H1 (cell line): ENCODE measurements at regions of chr16 and their contacts with region 1.

Region 1: DNA sequence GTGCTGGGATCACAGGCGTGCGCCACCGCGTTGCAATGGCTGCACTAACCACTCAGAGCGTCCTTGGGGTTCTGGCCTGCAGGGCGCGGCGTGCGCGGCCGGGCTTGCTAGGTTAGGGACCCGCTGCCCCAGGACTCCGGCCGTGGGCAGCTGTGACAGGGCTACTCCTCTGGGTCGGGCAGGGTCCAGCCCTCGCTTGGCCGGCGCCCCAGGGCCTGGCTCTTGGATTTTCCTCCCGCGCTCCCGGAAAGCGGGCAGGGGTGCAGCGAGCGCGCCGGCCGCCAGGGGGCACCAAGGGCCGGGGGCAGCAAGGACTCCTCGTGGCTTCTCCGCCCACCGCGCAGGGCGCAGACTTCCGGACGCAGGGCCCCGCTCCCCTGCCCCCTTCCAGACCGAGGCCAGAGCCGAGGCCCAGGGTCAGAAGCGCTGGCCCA is 489 bp downstream of the TLE7 start:
- DNase-seq: peak in 1 of 2 experiments; percentile 95
- H3K4me3 ChIP-seq: no peak overlapping the region
- H3K27ac ChIP-seq: no peak overlapping the region
- H3K4me1 ChIP-seq: no peaks in the 10 kb centered on the region; a peak in 1 of 7 replicates
- H3K27me3 ChIP-seq: no peaks in the 10 kb centered on the region
- CTCF ChIP-seq: peak; percentile 71 to 76 (median 74)
- EP300 ChIP-seq: no peak
- POLR2A ChIP-seq: no peak
- RAD21 ChIP-seq: peak; percentile 49 to 65

Region 2: GRCh38 chr16:71358464-71358998 is 82.8 kb before region 1 on chr16 and contains the start of gene CALB2:
- CTCF ChIA-PET with region 1: no interaction called
- POLR2A ChIA-PET with region 1: no interaction called
- DNase-seq: peak; percentile 27 to 91
- H3K4me3 ChIP-seq: peak within 1 kb of the TSS; percentile 30 to 65 (median 51); a peak in 7 of 8 replicates
- H3K27ac ChIP-seq: no peak within 1 kb of the TSS
- H3K4me1 ChIP-seq: peaks cover 0 to 12% (median 6%) of the 10 kb centered on the region in 4 experiments; a peak in 5 of 7 replicates
- H3K27me3 ChIP-seq: peaks cover 0 to 22% (median 18%) of the 10 kb centered on the region in 4 experiments; a peak in 6 of 7 replicates
- CTCF ChIP-seq: peak; percentile 77 to 97 (median 85)
- EP300 ChIP-seq: 0 out of 3 replicates have a peak, but pooled peaks of 1 of the 2 experiments have one; percentile 21
- POLR2A ChIP-seq: peak in 1 of 2 experiments; percentile 64; a peak in 1 of 3 replicates
- RAD21 ChIP-seq: peak; percentile 73 to 98
- total RNA-seq, gene CALB2: 1.9 and 2.7 TPM in 2 replicates

Region 3: DNA sequence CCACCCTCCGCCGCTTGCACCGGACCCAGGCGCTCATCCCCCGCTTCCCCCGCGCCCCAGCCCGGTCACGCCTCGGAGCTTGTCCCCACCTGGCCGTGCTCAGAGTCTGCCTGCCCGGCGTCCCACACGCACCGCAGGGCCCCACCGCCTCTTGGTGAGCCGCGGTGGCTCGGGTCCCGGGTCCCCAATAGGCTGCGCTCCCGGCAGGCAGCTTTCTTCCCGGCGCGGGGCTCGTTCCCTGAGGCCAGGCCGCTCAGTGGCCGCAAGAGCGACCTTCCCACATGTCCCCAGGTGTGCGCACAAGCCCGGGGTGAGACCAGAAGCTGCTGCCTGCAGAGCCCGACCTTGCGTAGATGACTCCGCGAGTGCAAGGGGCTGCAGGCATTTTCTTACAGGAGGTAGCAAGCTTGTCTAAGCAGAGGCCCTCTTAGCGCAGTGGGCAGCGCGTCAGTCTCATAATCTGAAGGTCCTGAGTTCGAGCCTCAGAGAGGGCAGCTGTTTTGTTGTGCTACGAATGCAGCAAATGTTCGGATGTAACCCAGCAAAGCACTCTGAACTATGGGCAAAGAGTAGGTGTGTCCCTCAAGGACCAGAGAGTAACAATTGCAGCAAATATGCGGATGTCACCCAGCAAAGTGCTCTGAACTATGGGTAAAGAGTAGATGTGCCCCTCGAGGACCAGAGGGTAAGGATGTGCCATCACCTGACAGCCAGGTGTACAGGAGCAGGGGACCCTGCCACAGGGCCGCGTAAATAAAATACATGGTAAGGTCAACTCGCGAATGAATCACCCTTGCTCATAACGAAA is 15.1 kb before region 1 on chr16:
- CTCF ChIA-PET with region 1: interaction called, 22 read pairs
- POLR2A ChIA-PET with region 1: interaction called, 4 read pairs
- DNase-seq: peak; percentile 94 to 99
- H3K4me3 ChIP-seq: peak overlapping the region; percentile 63 to 83 (median 74)
- H3K27ac ChIP-seq: no peak overlapping the region
- H3K4me1 ChIP-seq: peaks cover 0 to 5% (median 3%) of the 10 kb centered on the region in 4 experiments; a peak in 5 of 7 replicates
- H3K27me3 ChIP-seq: peaks cover 0 to 13% (median 5%) of the 10 kb centered on the region in 4 experiments; a peak in 4 of 7 replicates
- CTCF ChIP-seq: no peak
- EP300 ChIP-seq: no peak
- POLR2A ChIP-seq: no peak
- RAD21 ChIP-seq: no peak